Right ventricle myocardium superior (tissue), 1 donor: ENCODE measurements at regions of chr5 and their contacts with region 1.

Region 1: DNA sequence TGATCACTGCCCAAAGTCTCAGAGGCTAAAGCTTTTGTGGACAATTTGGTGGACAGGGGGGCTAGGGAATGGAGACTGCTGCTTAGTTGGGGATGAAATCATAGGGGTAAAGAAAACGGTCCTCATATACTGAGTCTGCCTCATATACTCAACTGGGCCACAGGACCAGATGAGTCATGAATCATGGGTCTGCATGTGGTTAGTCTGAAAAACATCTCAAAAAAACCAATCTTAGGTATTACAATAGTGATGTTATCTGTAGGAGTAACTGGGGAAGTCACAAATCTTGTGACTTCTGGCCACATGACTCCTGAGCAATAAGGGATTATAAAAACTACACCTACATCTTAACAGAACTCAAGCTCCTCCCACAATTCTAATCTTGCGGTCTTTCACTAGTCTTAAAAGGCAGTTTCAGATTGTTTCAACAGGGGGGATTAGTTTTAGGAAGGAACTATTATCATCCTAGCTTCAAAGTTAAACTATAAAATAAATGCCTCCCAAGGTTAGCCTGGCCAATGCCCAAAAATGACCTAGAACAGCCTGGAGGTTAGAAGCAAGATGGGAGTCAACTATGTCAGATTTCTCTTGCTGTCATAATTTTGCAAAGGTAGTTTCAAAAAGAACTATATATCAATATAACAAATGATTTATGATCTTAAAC is 17.5 kb downstream of the TMEM161B start:
- DNase-seq: no peak
- ATAC-seq: no peak

Region 2: DNA sequence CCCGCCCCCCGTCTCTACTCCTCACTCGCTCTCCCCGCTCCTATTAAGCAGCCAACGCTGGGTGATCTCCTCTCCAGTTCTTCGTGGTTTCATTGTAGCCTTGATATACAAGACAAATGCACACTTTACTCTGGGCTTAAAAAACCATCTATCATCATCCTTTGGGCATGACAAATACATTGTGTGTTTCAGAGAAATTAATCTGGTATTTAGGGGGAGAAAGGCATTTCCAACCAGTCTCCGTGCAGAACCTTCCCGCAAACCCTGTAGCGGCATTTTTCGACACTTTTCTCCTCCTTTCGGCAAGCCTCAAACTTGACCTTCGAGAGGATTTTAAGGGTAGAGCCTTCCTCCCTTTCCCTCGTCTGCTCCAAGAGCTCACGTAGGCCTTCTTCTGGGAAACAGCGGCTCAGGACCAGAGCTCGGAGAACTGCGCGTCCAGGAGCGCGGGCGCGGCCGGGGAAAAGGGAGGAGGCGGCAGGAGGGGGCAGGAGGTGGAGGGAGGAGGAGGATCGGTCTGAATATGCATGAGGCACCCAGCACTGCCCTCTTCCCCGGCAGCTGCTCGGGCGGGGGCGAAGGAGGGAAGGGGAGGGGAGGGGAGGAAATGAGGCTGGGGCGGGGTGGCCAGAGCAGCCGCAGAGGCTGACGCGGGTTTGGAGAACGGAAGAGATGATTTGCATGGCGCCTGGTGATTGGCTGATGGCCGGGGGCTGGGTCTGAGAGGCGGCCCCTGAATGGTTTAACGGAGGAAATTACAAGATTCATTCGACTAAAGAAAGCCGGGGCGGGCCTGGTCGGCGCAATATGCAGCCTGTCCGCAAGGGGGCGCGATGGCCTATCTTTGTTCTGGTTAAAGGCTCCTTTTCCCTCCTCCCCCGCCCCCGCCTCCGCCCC is 110.1 kb before region 1 on chr5:
- intact Hi-C with region 1: loop called (anchors 10 kb)
- DNase-seq: peak; percentile 97
- ATAC-seq: peak; percentile 97